ENCODE measurements at regions of chr15 and their contacts with region 1.

Region 1: GRCh38 chr15:63514531-63514943 is 10.1 kb downstream of the USP3 start:
- DNase-seq: no peak
- ATAC-seq: no peak
- H3K4me3 ChIP-seq: no peak overlapping the region
- H3K4me3 Mint-ChIP-seq: peak overlapping the region; percentile 43 to 68 (median 61)
- H3K27ac ChIP-seq: peak overlapping the region; percentile 7
- H3K27ac Mint-ChIP-seq: peak overlapping the region; percentile 66 to 88
- H3K4me1 ChIP-seq: peaks cover 30 to 74% of the 10 kb centered on the region in 2 experiments
- H3K4me1 Mint-ChIP-seq: peaks cover 94 to 97% (median 94%) of the 10 kb centered on the region in 3 donors
- H3K27me3 ChIP-seq: no peaks in the 10 kb centered on the region
- H3K27me3 Mint-ChIP-seq: no peaks in the 10 kb centered on the region

Region 2: DNA sequence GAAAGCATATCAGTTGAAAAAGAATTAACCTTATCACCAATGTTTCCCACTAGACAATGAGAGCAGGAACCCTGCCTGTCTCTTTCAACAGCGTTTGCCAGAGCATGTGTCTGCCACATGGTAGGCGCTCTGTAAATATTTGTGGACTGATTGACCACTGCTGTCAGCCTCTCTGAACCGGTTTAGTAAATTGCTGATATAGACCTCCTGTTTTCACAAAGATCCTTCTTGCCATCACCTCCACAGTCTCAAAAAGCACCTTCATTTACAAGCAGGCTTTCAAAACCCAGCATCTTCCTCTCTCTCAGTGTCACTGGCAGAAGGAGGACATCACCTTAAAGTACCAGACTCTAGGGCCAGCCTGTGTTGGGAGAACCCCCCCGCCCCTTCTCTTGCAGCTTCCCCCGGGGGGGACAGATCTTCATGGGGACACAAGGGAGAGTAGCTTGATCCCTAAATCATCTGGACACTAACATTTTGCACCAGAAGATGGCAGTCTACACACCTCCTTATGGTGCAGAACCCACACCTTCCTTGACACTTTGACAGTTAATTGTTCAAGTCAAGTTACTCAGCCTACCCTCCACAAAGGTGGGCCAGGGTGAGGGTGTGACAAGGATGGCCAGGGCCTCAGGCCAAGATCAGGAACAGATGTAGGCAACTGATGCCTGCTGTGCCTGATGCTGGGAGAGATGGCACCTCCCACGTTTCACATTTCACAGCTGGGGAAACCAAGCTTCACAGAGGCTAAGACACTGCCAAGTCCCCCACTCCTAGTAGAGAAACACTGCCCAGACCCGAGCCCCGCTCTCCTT is 48.0 kb before region 1 on chr15:
- CTCF ChIA-PET with region 1: interaction called, 3 to 10 read pairs
- POLR2A ChIA-PET with region 1: no interaction called
- DNase-seq: peak in 30 of 35 experiments; percentile 15 to 88 (median 43)
- ATAC-seq: peak; percentile 85 to 95 (median 94)
- H3K4me3 ChIP-seq: no peak overlapping the region
- H3K4me3 Mint-ChIP-seq: no peak overlapping the region
- H3K27ac ChIP-seq: no peak overlapping the region
- H3K27ac Mint-ChIP-seq: peak overlapping the region; percentile 70 to 77
- H3K4me1 ChIP-seq: peaks cover 9 to 10% of the 10 kb centered on the region in 2 experiments
- H3K4me1 Mint-ChIP-seq: peaks cover 30 to 43% (median 37%) of the 10 kb centered on the region in 3 donors
- H3K27me3 ChIP-seq: no peaks in the 10 kb centered on the region
- H3K27me3 Mint-ChIP-seq: no peaks in the 10 kb centered on the region

Region 3: DNA sequence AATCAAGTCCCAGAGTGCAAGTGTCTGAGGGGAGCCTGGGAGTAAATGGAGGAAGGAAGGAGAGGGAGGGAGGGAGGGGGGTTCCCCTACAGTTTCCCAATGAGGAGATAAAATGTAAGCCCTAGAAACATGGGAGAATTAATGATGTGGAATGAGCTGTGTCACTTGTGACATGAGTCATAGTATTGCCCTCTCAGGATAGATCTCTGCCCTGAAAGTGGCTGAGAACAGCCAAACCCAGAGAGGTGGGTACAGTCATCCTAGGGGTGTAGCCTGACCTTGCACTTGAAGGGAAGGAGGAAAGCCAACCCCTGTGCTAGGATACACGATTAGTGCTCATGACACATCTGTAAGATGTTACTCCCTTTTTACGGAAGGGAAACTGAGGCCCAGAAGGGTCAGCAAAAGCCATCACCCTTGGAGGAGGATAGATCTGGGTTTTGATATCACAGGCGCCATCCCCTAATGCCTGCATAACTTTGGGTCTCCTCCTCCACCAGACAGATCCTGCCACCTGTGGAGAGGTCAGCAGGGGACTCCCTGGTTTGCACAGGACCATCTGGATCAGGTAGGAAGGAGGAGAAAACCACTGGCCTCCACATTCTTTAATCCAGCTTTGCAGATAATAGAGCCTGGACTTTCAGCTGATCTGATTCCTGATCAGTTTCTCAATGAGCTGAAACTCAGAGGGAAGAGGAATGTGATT is 33.3 kb before region 1 on chr15:
- CTCF ChIA-PET with region 1: interaction called, 3 to 10 read pairs
- POLR2A ChIA-PET with region 1: interaction called, 3 to 5 read pairs
- DNase-seq: no peak
- ATAC-seq: no peak
- H3K4me3 ChIP-seq: no peak overlapping the region
- H3K4me3 Mint-ChIP-seq: peak overlapping the region in 1 of 3 donors; percentile 75
- H3K27ac ChIP-seq: peak overlapping the region; percentile 97
- H3K27ac Mint-ChIP-seq: peak overlapping the region; percentile 98 to 99
- H3K4me1 ChIP-seq: peaks cover 59 to 73% of the 10 kb centered on the region in 2 experiments
- H3K4me1 Mint-ChIP-seq: peaks cover 86 to 91% (median 87%) of the 10 kb centered on the region in 3 donors
- H3K27me3 ChIP-seq: no peaks in the 10 kb centered on the region
- H3K27me3 Mint-ChIP-seq: no peaks in the 10 kb centered on the region

Region 4: DNA sequence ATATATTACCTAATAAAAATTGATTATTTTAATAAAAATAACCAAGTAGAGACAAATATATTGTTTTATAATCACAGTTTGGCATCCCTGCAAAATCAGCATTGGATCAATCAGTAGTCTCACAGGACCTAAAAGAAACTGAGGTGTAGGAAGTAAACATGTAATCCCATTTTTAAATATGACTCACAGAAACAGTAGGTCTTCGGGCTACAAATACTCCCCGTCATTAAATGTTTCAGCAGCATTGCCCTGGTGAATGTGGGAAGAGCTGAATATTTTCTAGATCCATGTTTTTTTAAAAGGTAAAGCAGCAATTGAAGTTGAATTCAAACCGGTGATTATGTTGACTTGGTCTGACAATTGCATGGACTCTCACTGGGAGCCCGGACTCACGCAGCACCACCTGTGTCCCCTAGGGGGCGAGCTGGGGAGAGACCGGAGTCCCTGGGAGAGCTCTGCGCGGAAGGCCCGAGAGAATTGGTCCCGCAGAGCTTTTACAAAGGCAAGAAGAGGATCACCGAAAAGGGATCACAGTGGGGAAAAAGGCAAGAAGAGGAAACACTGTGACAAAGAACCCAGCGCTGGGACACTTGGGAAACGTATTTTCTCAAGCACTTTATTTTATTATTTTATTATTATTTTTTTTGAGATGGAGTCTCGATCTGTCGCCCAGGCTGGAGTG is 27.3 kb before region 1 on chr15:
- CTCF ChIA-PET with region 1: interaction called, 3 to 12 read pairs
- POLR2A ChIA-PET with region 1: interaction called, 3 to 5 read pairs
- DNase-seq: peak; percentile 62 to 92 (median 85)
- ATAC-seq: peak; percentile 88 to 93 (median 91)
- H3K4me3 ChIP-seq: no peak overlapping the region
- H3K4me3 Mint-ChIP-seq: peak overlapping the region in 2 of 3 donors; percentile 26 to 46
- H3K27ac ChIP-seq: peak overlapping the region; percentile 38
- H3K27ac Mint-ChIP-seq: peak overlapping the region; percentile 74 to 87
- H3K4me1 ChIP-seq: peaks cover 36 to 56% of the 10 kb centered on the region in 2 experiments
- H3K4me1 Mint-ChIP-seq: peaks cover 67 to 81% (median 80%) of the 10 kb centered on the region in 3 donors
- H3K27me3 ChIP-seq: no peaks in the 10 kb centered on the region
- H3K27me3 Mint-ChIP-seq: no peaks in the 10 kb centered on the region

Region 5: DNA sequence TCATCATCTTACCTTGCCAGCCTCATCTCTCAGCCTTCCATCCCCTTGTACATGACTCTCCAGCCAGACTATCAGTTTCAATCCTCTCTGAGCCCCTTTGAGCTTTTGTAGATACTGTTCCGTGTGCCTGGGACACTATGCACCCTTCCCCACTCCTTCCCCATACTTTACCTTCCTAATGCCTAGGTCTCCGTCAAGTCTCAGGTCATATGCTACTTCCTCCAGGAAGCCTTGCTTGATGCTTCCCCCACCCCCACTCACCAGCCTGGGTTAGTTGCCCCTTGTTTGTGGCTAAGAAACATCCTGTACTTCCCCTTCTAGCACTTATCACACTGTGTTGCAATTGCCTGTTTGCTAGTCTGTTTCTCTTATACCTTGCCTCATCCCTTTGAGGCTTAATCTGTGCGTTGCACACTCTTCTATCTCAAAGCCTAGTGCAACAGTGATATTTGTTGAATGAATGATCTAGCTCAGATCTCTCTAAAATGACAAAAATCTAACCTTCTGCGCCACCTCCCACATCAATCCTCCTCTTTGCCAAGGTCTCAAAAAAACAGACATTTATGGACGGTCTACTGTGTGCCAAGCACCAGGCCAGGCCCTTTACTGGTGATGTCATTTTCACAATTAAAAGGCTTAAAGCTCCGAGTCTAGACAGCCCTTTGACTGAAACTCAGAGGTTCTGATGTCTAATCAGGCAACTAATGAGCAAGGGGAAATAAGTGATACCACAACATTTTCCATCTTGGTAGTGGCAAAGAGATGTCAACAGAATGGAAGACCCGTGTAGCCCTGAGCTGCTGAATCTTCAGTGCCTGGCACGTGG is 16.7 kb before region 1 on chr15:
- CTCF ChIA-PET with region 1: interaction called in 1 of 2 experiments, 6 read pairs
- POLR2A ChIA-PET with region 1: interaction called, 9 to 15 read pairs
- DNase-seq: peak; percentile 59 to 90 (median 79)
- ATAC-seq: peak; percentile 77 to 85 (median 82)
- H3K4me3 ChIP-seq: peak overlapping the region; percentile 27 to 36
- H3K4me3 Mint-ChIP-seq: no peak overlapping the region
- H3K27ac ChIP-seq: peak overlapping the region; percentile 99
- H3K27ac Mint-ChIP-seq: no peak overlapping the region
- H3K4me1 ChIP-seq: peaks cover 69 to 88% of the 10 kb centered on the region in 2 experiments
- H3K4me1 Mint-ChIP-seq: peaks cover 50 to 82% (median 58%) of the 10 kb centered on the region in 3 donors
- H3K27me3 ChIP-seq: no peaks in the 10 kb centered on the region
- H3K27me3 Mint-ChIP-seq: no peaks in the 10 kb centered on the region

Region 6: GRCh38 chr15:63504247-63504978 is 10.1 kb before region 1 on chr15 and contains the start of gene USP3:
- CTCF ChIA-PET with region 1: interaction called, 3 to 7 read pairs
- POLR2A ChIA-PET with region 1: interaction called, 3 to 16 read pairs
- DNase-seq: peak; percentile 84 to 96 (median 91)
- ATAC-seq: peak; percentile 71 to 85 (median 75)
- H3K4me3 ChIP-seq: peak within 1 kb of the TSS; percentile 84 to 99
- H3K4me3 Mint-ChIP-seq: peak within 1 kb of the TSS; percentile 94 to 99 (median 96)
- H3K27ac ChIP-seq: peak within 1 kb of the TSS; percentile 99
- H3K27ac Mint-ChIP-seq: peak within 1 kb of the TSS; percentile 99
- H3K4me1 ChIP-seq: peaks cover 43 to 69% of the 10 kb centered on the region in 2 experiments
- H3K4me1 Mint-ChIP-seq: peaks cover 74 to 75% (median 75%) of the 10 kb centered on the region in 3 donors
- H3K27me3 ChIP-seq: no peaks in the 10 kb centered on the region
- H3K27me3 Mint-ChIP-seq: no peaks in the 10 kb centered on the region
- total RNA-seq, gene USP3: 123 to 265 (median 130) TPM

Region 7: GRCh38 chr15:63575312-63575711 is 60.8 kb after region 1 on chr15:
- CTCF ChIA-PET with region 1: interaction called in 1 of 2 experiments, 4 read pairs
- POLR2A ChIA-PET with region 1: interaction called, 3 to 12 read pairs
- DNase-seq: no peak
- ATAC-seq: no peak
- H3K4me3 ChIP-seq: no peak overlapping the region
- H3K4me3 Mint-ChIP-seq: no peak overlapping the region
- H3K27ac ChIP-seq: no peak overlapping the region
- H3K27ac Mint-ChIP-seq: peak overlapping the region in 1 of 2 donors; percentile 29
- H3K4me1 ChIP-seq: no peaks in the 10 kb centered on the region
- H3K4me1 Mint-ChIP-seq: peaks cover 7 to 14% (median 14%) of the 10 kb centered on the region in 3 donors
- H3K27me3 ChIP-seq: no peaks in the 10 kb centered on the region
- H3K27me3 Mint-ChIP-seq: no peaks in the 10 kb centered on the region

Region 8: DNA sequence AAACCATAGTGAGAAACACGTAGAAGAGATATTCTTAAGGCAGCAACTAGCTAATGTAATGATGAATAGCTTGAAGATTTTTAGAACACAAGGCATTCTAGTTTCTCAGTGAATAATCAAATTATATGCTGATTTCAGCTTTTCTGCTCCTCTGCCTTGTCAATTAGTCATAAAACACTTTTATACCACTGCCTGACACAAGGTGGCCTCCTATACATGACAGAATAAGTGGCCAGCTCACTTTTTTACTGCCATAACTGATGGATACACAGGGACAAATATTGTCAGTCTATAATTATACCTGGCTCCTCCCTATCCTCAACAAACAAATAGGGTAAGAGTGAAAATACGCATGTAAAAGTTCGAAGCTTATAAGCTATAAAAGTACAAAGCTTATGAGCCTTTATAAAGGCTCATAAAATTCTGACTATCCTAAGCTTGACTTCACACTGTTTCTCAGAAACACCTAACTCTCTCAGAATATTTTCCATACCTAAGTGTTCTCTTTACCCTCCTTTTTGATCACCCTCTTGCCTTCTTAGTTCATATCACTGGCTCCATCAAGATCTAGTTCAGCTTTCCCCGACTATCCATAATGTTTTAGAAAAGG is 237.6 kb after region 1 on chr15:
- CTCF ChIA-PET with region 1: no interaction called
- POLR2A ChIA-PET with region 1: no interaction called
- DNase-seq: peak in 22 of 35 experiments; percentile 9 to 71 (median 30)
- ATAC-seq: peak; percentile 58 to 77 (median 74)
- H3K4me3 ChIP-seq: no peak overlapping the region
- H3K4me3 Mint-ChIP-seq: no peak overlapping the region
- H3K27ac ChIP-seq: no peak overlapping the region
- H3K27ac Mint-ChIP-seq: peak overlapping the region; percentile 41 to 79
- H3K4me1 ChIP-seq: peaks cover 0 to 10% of the 10 kb centered on the region in 2 experiments
- H3K4me1 Mint-ChIP-seq: peaks cover 0 to 8% (median 6%) of the 10 kb centered on the region in 3 donors
- H3K27me3 ChIP-seq: no peaks in the 10 kb centered on the region
- H3K27me3 Mint-ChIP-seq: no peaks in the 10 kb centered on the region

Measured in T-cell (primary cell).